WTC11 (cell line): ENCODE measurements at regions of chr6 and their contacts with region 1.

Region 1: GRCh38 chr6:31079656-31080261 is 32.6 kb downstream of the C6orf15 start:
- DNase-seq: peak; percentile 80
- ATAC-seq: peak; percentile 82
- H3K4me3 Mint-ChIP-seq: no peak overlapping the region
- H3K27ac Mint-ChIP-seq: no peak overlapping the region
- H3K4me1 Mint-ChIP-seq: peaks cover 11% of the 10 kb centered on the region
- H3K27me3 Mint-ChIP-seq: no peaks in the 10 kb centered on the region
- CTCF ChIP-seq: peak; percentile 39

Region 2: DNA sequence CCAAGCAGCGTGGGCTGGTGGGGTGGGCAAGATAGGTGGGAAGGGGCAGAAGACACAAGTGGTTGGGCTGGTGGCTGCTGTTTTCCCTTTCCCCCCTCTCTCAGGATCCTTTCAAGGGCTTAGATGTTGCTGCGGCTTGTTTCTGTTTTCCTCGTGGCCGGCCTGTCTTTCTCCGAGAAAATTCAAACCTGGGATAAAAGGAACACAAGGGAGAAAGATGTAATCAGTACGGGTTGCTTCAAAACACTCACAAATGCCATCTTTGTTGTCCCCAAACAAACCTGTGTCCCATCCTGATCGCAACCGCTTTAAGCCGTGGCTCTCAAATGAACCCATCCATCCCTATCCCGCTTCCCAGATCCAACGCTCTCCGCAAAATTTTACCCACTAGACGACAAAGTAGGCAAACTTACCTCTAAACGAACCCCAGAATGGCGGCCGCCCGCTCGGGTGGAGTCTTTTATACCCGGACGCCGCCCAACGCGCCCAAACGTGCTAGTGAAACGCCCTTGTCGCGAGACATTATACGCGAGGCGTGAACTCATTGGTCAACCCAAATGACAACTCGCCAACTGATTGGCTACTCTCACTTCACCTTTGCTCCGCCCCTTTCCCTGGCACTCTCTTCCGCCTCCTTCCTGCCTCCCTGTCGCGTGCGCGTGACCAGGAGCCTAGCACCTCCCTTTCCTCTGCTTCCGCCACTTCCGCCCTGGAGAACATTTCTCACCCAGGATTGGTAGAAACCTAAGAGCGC is 462.8 kb before region 1 on chr6 and contains the start of gene PPP1R10:
- CTCF ChIA-PET with region 1: no interaction called
- POLR2A ChIA-PET with region 1: no interaction called
- DNase-seq: peak; percentile 99
- ATAC-seq: peak; percentile 82
- H3K4me3 Mint-ChIP-seq: peak within 1 kb of the TSS; percentile 96
- H3K27ac Mint-ChIP-seq: peak within 1 kb of the TSS; percentile 100
- H3K4me1 Mint-ChIP-seq: peaks cover 35% of the 10 kb centered on the region
- H3K27me3 Mint-ChIP-seq: no peaks in the 10 kb centered on the region; the same call in 1 of the 2 replicates
- CTCF ChIP-seq: no peak
- total RNA-seq, gene PPP1R10: 83.1 to 90.5 TPM (median 85.5 TPM) in 3 replicates

Region 3: GRCh38 chr6:30883685-30884520 is 195.9 kb before region 1 on chr6 and contains the start of gene DDR1:
- CTCF ChIA-PET with region 1: interaction called, 11 read pairs
- POLR2A ChIA-PET with region 1: no interaction called
- DNase-seq: peak; percentile 58
- ATAC-seq: peak; percentile 4
- H3K4me3 Mint-ChIP-seq: peak within 1 kb of the TSS; percentile 93
- H3K27ac Mint-ChIP-seq: peak within 1 kb of the TSS; percentile 99
- H3K4me1 Mint-ChIP-seq: peaks cover 71% of the 10 kb centered on the region
- H3K27me3 Mint-ChIP-seq: no peaks in the 10 kb centered on the region
- CTCF ChIP-seq: no peak
- total RNA-seq, gene DDR1: 195 to 230 TPM (median 203 TPM) in 3 replicates

Region 4: DNA sequence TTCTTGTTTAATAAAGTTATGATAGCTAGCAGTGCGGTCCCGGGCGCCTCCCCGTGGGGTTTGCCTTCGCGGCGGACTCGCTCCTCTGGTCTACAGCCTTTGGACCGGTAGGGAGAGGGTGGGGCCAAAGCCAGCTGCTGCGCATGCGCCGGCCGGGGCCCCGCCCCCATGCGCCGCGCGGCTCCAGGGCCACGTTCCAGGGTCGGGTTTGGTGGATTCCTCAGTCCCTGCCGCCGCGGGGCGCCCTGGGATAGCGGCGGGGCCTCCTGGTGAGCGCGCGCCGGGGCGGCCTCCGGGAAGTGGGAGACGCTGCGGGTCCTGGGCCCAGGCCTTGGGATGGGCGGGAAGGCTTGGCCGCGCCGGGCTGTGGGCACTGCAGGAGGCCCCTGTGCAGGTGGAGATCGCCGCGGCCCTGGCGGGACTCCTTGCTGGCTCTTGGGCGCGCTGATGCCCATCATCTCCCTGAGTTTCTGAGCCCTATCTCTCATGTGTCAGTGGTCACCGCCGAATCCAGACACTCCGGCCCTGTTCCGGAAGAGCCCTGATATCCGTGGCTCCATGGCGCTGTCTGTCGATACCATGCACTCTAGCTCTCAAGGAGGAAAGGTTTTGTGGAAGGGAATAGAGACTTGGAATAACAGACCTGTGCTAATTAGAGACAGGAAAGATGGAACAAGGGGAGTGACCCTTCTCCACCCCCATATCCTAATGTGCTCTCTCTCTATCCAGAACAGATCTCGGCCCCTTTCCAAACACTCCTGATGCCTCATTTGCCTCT is 165.5 kb before region 1 on chr6 and contains the start of gene VARS2:
- CTCF ChIA-PET with region 1: interaction called, 106 read pairs
- POLR2A ChIA-PET with region 1: interaction called, 4 read pairs
- DNase-seq: peak; percentile 83
- ATAC-seq: peak; percentile 85
- H3K4me3 Mint-ChIP-seq: peak within 1 kb of the TSS; percentile 90
- H3K27ac Mint-ChIP-seq: peak within 1 kb of the TSS; percentile 90
- H3K4me1 Mint-ChIP-seq: peaks cover 22% of the 10 kb centered on the region
- H3K27me3 Mint-ChIP-seq: no peaks in the 10 kb centered on the region
- CTCF ChIP-seq: no peak
- total RNA-seq, gene VARS2: 65.6 to 74.1 TPM (median 69.9 TPM) in 3 replicates

Region 5: DNA sequence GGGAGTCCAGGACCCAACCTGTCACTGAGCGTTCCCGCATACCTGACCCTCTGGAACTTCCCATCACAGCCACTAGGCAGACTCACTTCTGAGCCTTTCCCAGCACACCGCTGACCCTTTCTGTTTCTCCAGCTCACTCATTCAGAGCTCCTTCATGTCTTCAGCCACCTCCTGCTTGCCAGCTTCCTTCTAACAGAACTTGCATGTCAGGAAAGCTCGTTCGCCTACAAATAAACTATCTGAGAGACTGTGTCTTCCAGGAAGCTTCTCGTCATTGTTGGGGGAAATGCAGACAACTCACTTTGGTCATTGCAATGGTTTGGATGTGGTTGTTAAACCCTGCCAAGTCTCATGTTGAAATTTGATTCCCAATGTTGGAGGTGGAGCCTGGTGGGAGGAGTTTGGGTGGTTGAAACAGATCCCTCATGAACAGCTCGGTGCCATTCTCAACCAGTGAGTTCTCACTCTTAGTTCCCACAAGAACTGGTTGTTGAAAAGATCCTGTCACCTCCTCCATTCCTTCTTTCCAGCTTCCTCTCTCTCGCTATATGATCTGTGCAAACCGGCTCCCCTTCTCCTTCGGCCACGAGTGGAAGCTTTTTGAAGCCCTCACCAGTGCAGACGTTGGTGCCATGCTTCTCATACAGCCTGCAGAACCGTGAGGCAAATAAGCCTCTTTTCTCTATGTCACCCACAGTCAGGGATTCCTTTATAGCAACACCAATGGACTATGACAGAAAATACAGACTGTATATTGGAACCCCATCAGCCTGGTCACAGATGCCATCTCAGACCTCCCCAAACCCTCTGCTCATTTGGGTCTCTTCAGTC is 97.6 kb before region 1 on chr6:
- CTCF ChIA-PET with region 1: interaction called, 23 read pairs
- POLR2A ChIA-PET with region 1: no interaction called
- DNase-seq: peak; percentile 67
- ATAC-seq: peak; percentile 99
- H3K4me3 Mint-ChIP-seq: peak overlapping the region; percentile 57
- H3K27ac Mint-ChIP-seq: peak overlapping the region; percentile 92
- H3K4me1 Mint-ChIP-seq: peaks cover 21% of the 10 kb centered on the region
- H3K27me3 Mint-ChIP-seq: no peaks in the 10 kb centered on the region; the same call in none of the 2 replicates
- CTCF ChIP-seq: no peak

Region 6: DNA sequence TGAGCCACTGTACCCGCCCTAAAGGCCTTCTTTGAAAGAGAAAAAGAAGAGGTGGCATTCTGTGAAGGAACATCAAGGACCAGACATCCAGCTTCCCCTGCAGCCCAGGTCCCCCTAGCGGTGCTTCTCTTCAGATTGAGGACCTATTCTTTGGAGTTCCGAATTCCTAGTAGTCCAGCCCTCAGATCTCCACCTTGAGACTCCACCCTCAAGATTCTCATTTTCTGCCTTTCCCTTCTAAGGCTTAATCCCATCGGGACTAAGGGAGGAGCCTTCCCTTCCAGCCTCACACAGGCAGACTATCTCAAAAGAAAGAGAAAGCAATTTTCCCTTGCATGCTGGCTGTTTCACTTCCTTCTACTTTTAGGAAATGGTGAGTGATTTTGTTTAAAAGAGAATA is 37.0 kb before region 1 on chr6:
- CTCF ChIA-PET with region 1: interaction called, 17 read pairs
- POLR2A ChIA-PET with region 1: interaction called, 7 read pairs
- DNase-seq: peak; percentile 72
- ATAC-seq: peak; percentile 94
- H3K4me3 Mint-ChIP-seq: no peak overlapping the region
- H3K27ac Mint-ChIP-seq: no peak overlapping the region
- H3K4me1 Mint-ChIP-seq: no peaks in the 10 kb centered on the region; the same call in 1 of the 2 replicates
- H3K27me3 Mint-ChIP-seq: no peaks in the 10 kb centered on the region
- CTCF ChIP-seq: peak; percentile 54

Region 7: GRCh38 chr6:31068669-31069340 is 11.0 kb before region 1 on chr6:
- CTCF ChIA-PET with region 1: interaction called, 72 read pairs
- POLR2A ChIA-PET with region 1: interaction called, 10 read pairs
- DNase-seq: peak; percentile 84
- ATAC-seq: peak; percentile 62
- H3K4me3 Mint-ChIP-seq: no peak overlapping the region
- H3K27ac Mint-ChIP-seq: 0 out of 2 replicates have a peak overlapping the region, but pooled peaks have one; percentile 42
- H3K4me1 Mint-ChIP-seq: peaks cover 25% of the 10 kb centered on the region
- H3K27me3 Mint-ChIP-seq: no peaks in the 10 kb centered on the region
- CTCF ChIP-seq: peak; percentile 90

Region 8: GRCh38 chr6:31128093-31128676 is 48.4 kb after region 1 on chr6:
- CTCF ChIA-PET with region 1: interaction called, 12 read pairs
- POLR2A ChIA-PET with region 1: no interaction called
- DNase-seq: peak; percentile 88
- ATAC-seq: peak; percentile 75
- H3K4me3 Mint-ChIP-seq: no peak overlapping the region
- H3K27ac Mint-ChIP-seq: peak overlapping the region; percentile 2; the same call in 1 of the 2 replicates
- H3K4me1 Mint-ChIP-seq: peaks cover 42% of the 10 kb centered on the region
- H3K27me3 Mint-ChIP-seq: peaks cover 10% of the 10 kb centered on the region
- CTCF ChIP-seq: peak; percentile 90

Region 9: GRCh38 chr6:31585491-31585890 is 505.7 kb after region 1 on chr6:
- CTCF ChIA-PET with region 1: no interaction called
- POLR2A ChIA-PET with region 1: no interaction called
- DNase-seq: peak; percentile 62
- ATAC-seq: peak; percentile 54
- H3K4me3 Mint-ChIP-seq: no peak overlapping the region
- H3K27ac Mint-ChIP-seq: no peak overlapping the region
- H3K4me1 Mint-ChIP-seq: peaks cover 20% of the 10 kb centered on the region
- H3K27me3 Mint-ChIP-seq: peaks cover 20% of the 10 kb centered on the region
- CTCF ChIP-seq: peak; percentile 54